B cell (primary cell): ENCODE measurements at regions of chr2 and their contacts with region 1.

Region 1: GRCh38 chr2:41782306-41783158 is 265.3 kb upstream of the PKDCC start:
- DNase-seq: peak; percentile 51
- ATAC-seq: no peak
- H3K4me3 ChIP-seq: no peak overlapping the region
- H3K4me3 Mint-ChIP-seq: no peak overlapping the region
- H3K27ac ChIP-seq: no peak overlapping the region
- H3K27ac Mint-ChIP-seq: no peak overlapping the region
- H3K4me1 ChIP-seq: no peaks in the 10 kb centered on the region
- H3K4me1 Mint-ChIP-seq: no peaks in the 10 kb centered on the region
- H3K27me3 ChIP-seq: no peaks in the 10 kb centered on the region
- H3K27me3 Mint-ChIP-seq: peaks cover 4% of the 10 kb centered on the region
- CTCF ChIP-seq: peak; percentile 94

Region 2: DNA sequence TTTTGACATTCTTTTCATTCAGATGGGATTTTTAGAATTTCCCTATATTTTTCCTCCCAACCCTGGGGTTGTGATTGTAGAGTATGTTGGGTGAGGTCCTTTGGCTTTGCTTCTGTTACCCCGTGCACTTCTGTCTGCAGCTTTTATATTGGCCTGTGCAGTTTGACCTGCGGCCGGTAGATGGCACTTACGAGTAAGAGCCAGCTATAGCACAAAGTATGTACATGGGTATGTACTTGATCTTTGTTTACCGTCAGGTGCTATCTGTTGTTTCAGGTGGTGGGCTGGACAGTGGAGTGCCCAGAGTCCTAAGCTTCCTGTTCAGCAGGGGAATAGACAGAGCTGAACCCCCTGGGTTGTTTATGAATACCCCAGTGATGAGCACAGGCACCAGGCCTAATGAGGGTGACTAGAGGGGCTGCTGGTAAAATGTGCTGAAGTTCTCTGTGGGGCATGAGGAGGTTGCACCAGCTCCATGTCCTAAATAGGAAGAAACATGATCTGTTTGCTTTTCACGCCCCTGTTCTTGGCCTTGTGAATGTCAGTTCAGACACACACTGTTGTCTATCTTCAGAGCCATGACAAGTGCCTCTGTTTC is 1944.6 kb before region 1 on chr2:
- CTCF ChIA-PET with region 1: interaction called, 9 read pairs
- POLR2A ChIA-PET with region 1: no interaction called
- intact Hi-C with region 1: loop called (anchors 5 kb)
- DNase-seq: peak; percentile 25
- ATAC-seq: no peak
- H3K4me3 ChIP-seq: no peak overlapping the region
- H3K4me3 Mint-ChIP-seq: no peak overlapping the region
- H3K27ac ChIP-seq: no peak overlapping the region
- H3K27ac Mint-ChIP-seq: no peak overlapping the region
- H3K4me1 ChIP-seq: no peaks in the 10 kb centered on the region
- H3K4me1 Mint-ChIP-seq: no peaks in the 10 kb centered on the region
- H3K27me3 ChIP-seq: no peaks in the 10 kb centered on the region
- H3K27me3 Mint-ChIP-seq: peaks cover 9% of the 10 kb centered on the region
- CTCF ChIP-seq: peak; percentile 72

Region 3: GRCh38 chr2:39913648-39914461 is 1868.7 kb before region 1 on chr2:
- CTCF ChIA-PET with region 1: interaction called, 22 read pairs
- POLR2A ChIA-PET with region 1: no interaction called
- intact Hi-C with region 1: no loop called
- DNase-seq: peak; percentile 53
- ATAC-seq: peak; percentile 36
- H3K4me3 ChIP-seq: no peak overlapping the region
- H3K4me3 Mint-ChIP-seq: no peak overlapping the region
- H3K27ac ChIP-seq: no peak overlapping the region
- H3K27ac Mint-ChIP-seq: no peak overlapping the region
- H3K4me1 ChIP-seq: no peaks in the 10 kb centered on the region
- H3K4me1 Mint-ChIP-seq: no peaks in the 10 kb centered on the region
- H3K27me3 ChIP-seq: no peaks in the 10 kb centered on the region
- H3K27me3 Mint-ChIP-seq: no peaks in the 10 kb centered on the region
- CTCF ChIP-seq: peak; percentile 85

Region 4: DNA sequence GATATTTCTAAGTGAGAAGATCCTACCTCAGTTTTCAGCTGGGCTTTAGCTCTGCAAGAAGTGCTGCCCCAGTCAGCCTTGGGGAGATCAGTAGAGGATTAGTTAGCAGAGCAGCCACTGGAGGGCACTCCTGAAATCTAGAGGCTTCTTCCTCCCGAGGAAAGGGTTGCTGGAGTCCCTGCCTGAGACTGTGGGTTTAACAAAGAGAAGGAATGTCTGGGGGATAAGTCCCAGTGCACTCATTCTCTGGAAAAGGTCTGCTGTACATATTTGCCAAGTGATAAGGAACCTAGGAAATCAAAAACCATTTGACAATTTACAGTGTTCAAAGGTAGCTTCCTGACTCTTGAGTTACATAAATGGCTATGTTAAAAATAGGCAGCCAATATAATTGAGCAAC is 1537.9 kb before region 1 on chr2:
- CTCF ChIA-PET with region 1: no interaction called
- POLR2A ChIA-PET with region 1: no interaction called
- intact Hi-C with region 1: loop called (anchors 10 kb)
- DNase-seq: peak; percentile 6
- ATAC-seq: no peak
- H3K4me3 ChIP-seq: no peak overlapping the region
- H3K4me3 Mint-ChIP-seq: no peak overlapping the region
- H3K27ac ChIP-seq: no peak overlapping the region
- H3K27ac Mint-ChIP-seq: no peak overlapping the region
- H3K4me1 ChIP-seq: no peaks in the 10 kb centered on the region
- H3K4me1 Mint-ChIP-seq: no peaks in the 10 kb centered on the region
- H3K27me3 ChIP-seq: no peaks in the 10 kb centered on the region
- H3K27me3 Mint-ChIP-seq: no peaks in the 10 kb centered on the region
- CTCF ChIP-seq: no peak